ENCODE measurements at regions of chr5 and their contacts with region 1.

Region 1: DNA sequence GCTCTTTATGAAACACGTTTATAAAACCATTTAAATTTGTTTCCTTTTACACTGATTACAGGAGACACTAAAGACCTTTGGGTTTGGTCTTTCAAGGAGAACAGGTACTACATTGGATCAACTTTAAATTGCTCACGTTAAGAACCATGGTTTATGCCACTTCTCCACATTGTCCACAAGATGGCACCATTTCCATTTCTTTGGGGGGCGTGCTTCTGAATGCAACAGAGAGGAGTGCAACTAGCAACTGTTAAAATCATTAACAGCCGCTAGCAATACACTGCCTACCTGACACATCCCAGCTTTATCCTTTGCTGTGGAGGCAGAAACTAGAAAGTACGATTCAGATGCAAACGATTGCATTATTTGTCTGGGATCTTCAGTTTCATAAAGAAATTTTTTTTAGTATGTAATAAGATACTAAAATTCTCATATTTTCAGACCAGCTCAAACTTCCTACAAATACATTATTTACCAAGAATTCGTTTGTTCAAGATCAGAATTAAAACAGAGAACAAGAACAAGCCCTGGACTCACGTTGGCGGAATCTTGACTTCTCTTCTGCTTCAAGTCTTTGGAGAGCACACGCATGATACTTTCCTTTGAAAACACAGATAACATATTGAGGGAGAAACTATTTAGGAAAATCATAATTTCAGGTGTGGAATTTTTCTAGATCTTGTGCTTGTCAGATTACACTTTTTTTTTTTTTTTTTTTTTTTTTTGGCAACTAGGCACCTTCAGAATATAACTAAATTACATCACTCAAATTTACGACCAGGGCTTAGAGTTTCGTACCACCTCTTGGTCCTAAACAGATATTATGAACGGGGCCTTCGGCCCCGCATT is 702 bp downstream of the CDC20B start:
- DNase-seq: peak; percentile 61
- H3K4me3 Mint-ChIP-seq: peak overlapping the region; percentile 86
- H3K27ac Mint-ChIP-seq: no peak overlapping the region
- H3K4me1 Mint-ChIP-seq: peaks cover 46% of the 10 kb centered on the region
- H3K27me3 Mint-ChIP-seq: peaks cover 78% of the 10 kb centered on the region

Region 2: DNA sequence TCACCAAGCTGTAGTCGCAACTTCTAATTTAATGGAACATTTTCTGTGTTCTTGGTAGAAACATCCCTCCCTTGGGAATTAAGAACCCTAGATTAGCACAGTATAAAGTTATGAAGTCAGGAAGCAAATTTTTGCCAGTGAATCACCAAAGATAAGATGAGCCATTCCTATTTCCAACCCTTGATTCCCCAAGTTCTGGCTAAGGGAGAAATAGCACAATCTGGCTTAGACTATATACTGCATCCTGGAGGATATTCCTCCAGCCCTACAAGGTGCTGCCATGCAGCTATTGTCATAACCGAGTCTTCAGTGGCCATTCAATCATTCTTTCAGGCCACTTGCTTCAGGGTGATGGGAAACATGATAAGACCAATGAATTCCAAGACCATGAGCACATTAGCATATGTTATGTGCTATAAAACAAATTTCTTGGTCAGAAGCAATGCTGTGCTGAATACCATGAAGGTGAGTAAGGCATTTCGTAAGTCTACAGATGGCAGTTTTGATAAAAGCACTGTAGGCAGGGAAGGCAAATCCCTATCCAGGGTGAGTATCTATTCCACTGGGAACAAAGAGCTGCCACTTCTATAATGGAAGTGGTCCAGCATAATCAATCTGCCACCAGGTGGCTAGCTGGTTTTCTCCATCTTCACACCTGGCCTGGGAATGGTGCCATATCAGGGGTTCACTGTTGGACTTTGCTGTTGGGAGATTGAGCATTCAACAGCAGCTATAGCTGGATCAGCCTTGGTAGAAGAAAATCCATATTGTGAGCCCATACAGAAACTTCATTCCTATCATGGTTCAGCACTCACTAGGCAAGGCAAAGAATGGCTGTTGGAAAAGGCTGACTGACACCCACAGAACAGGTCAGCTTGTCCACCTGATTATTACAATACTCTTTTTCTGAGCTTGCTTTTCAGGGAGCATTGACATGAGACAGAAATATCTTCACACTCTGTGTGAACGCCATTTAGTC is 842.3 kb before region 1 on chr5:
- intact Hi-C with region 1: no loop called
- DNase-seq: no peak
- H3K4me3 Mint-ChIP-seq: no peak overlapping the region
- H3K27ac Mint-ChIP-seq: no peak overlapping the region
- H3K4me1 Mint-ChIP-seq: peaks cover 7% of the 10 kb centered on the region
- H3K27me3 Mint-ChIP-seq: peaks cover 14% of the 10 kb centered on the region

Region 3: GRCh38 chr5:55226027-55226933 is 54.0 kb after region 1 on chr5:
- intact Hi-C with region 1: loop called (anchors 1 kb)
- DNase-seq: no peak
- H3K4me3 Mint-ChIP-seq: peak overlapping the region; percentile 61
- H3K27ac Mint-ChIP-seq: peak overlapping the region; percentile 65
- H3K4me1 Mint-ChIP-seq: peaks cover 58% of the 10 kb centered on the region
- H3K27me3 Mint-ChIP-seq: peaks cover 87% of the 10 kb centered on the region

Region 4: DNA sequence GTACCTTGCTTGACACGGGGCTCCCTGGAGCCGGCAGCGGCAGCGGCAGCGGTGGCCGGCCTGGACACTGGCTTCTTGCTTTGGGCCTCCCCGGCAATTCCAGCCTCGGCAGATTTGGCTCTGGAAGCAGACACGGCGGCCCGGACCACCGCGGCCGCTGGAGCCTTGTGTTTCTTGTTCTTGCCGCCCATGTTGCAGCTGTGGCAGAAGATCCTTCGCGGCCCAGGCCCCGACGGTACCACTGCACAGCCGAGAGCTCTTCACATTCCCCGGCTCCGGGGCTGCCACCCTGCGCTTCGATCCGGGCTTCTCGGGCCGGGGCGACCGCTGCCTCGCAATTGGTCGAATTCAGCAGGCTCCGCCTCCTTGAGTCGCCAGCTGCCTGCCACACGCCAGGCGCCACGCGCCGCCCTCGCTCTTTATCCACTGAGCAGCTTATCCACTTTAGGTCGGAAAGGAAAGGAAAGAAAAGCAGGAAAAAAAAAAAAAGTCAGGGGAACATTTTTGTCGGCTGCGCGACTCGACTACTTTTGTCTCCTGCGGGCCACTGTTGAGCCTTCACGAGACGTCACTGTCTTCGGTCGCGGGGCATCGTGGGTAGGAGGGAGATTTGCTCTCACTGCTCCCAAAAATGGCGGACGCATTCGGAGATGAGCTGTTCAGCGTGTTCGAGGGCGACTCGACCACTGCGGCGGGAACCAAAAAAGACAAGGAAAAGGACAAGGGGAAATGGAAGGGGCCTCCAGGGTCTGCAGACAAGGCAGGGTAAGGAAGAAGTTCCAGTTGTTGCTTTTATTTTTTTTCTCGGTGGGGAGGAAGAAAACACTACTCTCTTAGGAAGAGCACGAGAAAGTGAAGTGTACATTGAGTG is 135.3 kb after region 1 on chr5 and contains the starts of genes DHX29 and MTREX:
- intact Hi-C with region 1: loop called (anchors 1 kb)
- DNase-seq: peak; percentile 89
- H3K4me3 Mint-ChIP-seq: no peak within 1 kb of the TSS
- H3K27ac Mint-ChIP-seq: no peak within 1 kb of the TSS
- H3K4me1 Mint-ChIP-seq: peaks cover 19% of the 10 kb centered on the region
- H3K27me3 Mint-ChIP-seq: no peaks in the 10 kb centered on the region
- total RNA-seq, gene DHX29: 20.3 and 22.3 TPM in 2 replicates
- total RNA-seq, gene MTREX: 110 and 122 TPM in 2 replicates

Region 5: DNA sequence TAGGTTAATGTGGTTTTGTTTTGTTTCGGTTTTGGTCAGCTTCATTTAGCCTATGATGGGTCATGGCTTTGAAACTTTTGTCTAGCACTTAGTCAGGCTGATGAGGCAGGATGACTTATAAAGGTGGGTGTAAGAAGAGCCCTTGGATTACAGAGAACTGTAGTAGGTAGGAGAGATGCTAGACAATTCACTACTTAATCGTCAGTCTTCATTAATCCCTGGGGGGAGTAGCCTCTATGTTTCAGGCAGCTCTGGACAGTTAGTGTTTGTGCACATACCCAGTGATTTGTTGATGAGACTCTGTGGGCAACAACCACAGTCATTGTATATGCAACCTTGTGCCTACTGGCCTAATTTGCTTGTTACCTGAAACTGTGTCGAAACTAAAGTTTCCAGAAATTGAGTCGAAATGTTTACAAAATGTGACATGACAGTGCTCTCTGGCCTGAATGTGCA is 248.8 kb after region 1 on chr5:
- intact Hi-C with region 1: loop called (anchors 10 kb)
- DNase-seq: no peak
- H3K4me3 Mint-ChIP-seq: no peak overlapping the region
- H3K27ac Mint-ChIP-seq: peak overlapping the region; percentile 3
- H3K4me1 Mint-ChIP-seq: peaks cover 16% of the 10 kb centered on the region
- H3K27me3 Mint-ChIP-seq: no peaks in the 10 kb centered on the region

Region 6: GRCh38 chr5:55711968-55712859 is 539.9 kb after region 1 on chr5 and contains the start of gene SLC38A9:
- intact Hi-C with region 1: loop called (anchors 1 kb)
- DNase-seq: peak; percentile 89
- H3K4me3 Mint-ChIP-seq: peak within 1 kb of the TSS; percentile 99
- H3K27ac Mint-ChIP-seq: peak within 1 kb of the TSS; percentile 91
- H3K4me1 Mint-ChIP-seq: peaks cover 39% of the 10 kb centered on the region
- H3K27me3 Mint-ChIP-seq: no peaks in the 10 kb centered on the region
- total RNA-seq, gene SLC38A9: 22.9 and 25.7 TPM in 2 replicates